CD4-positive, alpha-beta memory T cell (primary cell): ENCODE measurements at regions of chr7 and their contacts with region 1.

Region 1: DNA sequence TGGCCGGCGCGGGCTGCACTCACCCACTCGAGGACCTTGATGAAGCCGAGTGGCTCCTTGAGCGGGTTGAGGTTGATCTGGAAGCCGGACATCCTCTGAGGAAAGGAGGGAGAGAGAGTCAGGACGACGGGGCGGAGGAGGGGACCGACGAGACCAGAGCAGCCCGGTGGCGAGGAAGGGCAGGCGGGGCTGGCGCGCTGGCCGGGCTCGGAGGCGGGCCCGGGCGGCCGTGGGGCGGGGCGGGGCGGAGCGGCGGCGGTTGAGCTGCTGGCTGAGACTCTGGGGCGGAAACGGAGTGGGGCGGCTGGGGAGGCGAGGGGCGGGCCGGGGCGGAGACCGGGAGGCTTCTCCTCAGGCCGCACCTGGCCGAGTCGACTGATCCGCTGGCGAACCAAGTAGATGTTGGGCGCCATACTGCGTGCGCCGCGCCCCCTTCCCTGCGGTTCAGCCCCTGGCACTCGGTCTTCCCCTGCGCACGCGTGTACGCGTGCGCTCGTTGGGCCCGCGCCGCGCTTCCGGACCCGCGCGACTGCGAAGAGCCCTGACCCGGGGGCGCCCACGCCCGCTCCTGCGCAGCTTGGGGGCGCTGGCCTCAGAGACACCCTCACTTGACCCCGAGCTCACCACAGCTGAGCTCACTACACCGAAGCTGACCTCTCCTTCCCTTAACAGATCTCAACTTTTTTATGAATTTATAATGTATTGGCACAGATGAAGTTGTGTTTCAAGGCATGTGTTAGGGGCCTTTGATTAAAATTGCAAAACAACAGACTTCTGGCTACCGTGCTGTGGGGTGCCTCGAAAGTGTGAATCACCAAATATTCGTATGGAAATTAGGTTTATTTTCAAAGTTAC is at the start of gene SYPL1:
- DNase-seq: peak; percentile 91 to 93 (median 92)
- H3K4me3 ChIP-seq: peak within 1 kb of the TSS; percentile 60 to 76
- H3K4me3 Mint-ChIP-seq: peak within 1 kb of the TSS; percentile 88 to 96 (median 92)
- H3K27ac ChIP-seq: peak within 1 kb of the TSS; percentile 69
- H3K27ac Mint-ChIP-seq: peak within 1 kb of the TSS; percentile 84 to 98 (median 97)
- H3K4me1 ChIP-seq: peaks cover 52% of the 10 kb centered on the region
- H3K4me1 Mint-ChIP-seq: peaks cover 53 to 75% (median 65%) of the 10 kb centered on the region in 4 donors
- H3K27me3 ChIP-seq: no peaks in the 10 kb centered on the region
- H3K27me3 Mint-ChIP-seq: no peaks in the 10 kb centered on the region
- total RNA-seq, gene SYPL1: 46.9 to 47.9 TPM

Region 2: DNA sequence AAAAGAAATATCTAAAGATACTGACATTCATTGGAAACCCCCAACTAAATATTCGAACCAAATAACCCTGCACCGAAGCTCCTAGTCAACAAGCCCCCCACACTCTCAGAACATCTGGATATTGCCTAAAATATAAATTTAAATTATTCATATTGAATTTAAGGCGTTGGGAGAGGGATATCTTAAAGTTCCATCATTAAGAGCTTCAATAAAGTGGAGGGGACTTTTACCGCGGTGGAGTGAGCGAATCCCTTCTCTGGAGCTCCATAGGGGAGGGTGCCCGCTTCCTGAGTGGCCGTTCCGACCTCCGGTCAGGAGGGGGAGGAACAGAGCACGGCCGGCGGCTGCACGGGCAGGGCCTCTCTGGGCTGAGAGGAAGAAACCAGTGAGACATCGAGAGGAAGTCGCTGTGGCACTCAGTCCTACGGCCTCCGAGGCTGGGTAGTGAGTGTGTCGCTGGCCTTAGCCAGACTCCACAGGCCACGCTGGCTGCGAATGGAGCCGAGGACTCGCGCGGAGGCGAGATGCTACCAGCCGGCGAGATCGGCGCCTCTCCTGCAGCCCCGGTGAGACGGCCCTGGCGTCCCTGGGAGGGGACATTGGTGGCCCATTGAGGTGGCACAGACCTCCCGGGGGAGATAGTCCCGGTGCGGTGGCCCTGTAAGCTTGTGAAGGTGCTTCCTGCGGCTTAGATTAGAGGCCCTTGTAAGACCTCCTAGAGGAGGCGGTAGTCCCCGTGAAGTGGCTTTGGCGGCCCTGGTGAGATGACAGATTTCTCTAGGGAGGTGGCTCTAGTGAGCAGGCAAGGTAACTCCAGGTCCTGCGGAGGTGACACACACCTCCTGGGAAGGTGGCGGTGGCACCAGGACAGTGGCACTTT is 580.3 kb before region 1 on chr7 and contains the start of gene RINT1:
- CTCF ChIA-PET with region 1: interaction called, 6 read pairs
- POLR2A ChIA-PET with region 1: interaction called, 4 read pairs
- intact Hi-C with region 1: loop called (anchors 5 kb)
- DNase-seq: peak; percentile 86 to 88 (median 87)
- H3K4me3 ChIP-seq: peak within 1 kb of the TSS; percentile 93 to 94
- H3K4me3 Mint-ChIP-seq: peak within 1 kb of the TSS; percentile 85 to 98 (median 92)
- H3K27ac ChIP-seq: peak within 1 kb of the TSS; percentile 77
- H3K27ac Mint-ChIP-seq: peak within 1 kb of the TSS; percentile 73 to 98 (median 97)
- H3K4me1 ChIP-seq: peaks cover 23% of the 10 kb centered on the region
- H3K4me1 Mint-ChIP-seq: peaks cover 16 to 50% (median 30%) of the 10 kb centered on the region in 4 donors
- H3K27me3 ChIP-seq: no peaks in the 10 kb centered on the region
- H3K27me3 Mint-ChIP-seq: no peaks in the 10 kb centered on the region
- total RNA-seq, gene RINT1: 25.7 to 26.5 TPM

Region 3: DNA sequence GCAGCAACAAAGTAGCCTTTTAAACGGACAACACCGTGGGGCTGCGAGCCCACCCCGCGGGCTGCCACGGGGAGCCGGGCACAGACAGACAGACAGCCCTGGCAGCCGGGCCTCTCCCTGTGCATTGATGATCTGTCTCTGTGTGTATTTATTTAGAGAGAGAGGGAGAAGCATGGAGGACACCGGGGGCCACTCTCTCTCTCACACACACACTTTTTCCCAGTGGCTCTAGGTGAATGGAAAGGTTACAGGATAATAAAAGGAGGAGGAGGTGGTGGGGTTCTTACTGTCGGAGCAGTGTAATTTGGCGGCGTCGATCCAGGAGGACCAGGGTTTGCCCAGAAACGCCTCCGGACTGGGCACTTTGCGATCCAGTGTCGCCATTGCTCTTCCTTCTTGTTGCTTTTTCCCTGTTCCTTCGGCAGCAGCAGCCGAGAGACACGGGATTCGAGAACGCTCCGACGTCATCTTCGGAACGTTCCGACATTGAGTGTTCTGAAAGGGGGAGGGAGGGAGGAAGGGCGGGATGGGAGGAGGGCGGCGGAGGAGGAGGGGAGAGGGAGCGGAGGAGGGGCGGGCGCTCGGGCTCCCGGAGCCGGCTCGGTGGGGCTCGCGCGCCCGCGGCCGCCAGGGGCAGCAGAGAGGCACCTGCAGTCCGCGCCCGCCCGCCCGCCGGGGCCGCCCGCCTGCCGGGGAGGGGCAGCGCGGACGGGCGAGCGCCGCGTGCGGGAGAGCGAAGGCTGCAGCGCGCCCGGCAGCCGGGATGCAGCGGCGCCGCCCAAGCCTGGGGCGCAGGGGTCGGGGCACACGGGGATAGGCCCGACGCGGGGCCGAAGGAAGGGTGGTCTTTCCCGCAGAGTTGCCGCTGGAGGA is 236.0 kb before region 1 on chr7 and contains the start of gene ATXN7L1:
- CTCF ChIA-PET with region 1: no interaction called
- POLR2A ChIA-PET with region 1: interaction called, 3 read pairs
- intact Hi-C with region 1: loop called (anchors 5 kb)
- DNase-seq: peak; percentile 85 to 90 (median 86)
- H3K4me3 ChIP-seq: peak within 1 kb of the TSS; percentile 78 to 92
- H3K4me3 Mint-ChIP-seq: peak within 1 kb of the TSS; percentile 95 to 100 (median 98)
- H3K27ac ChIP-seq: peak within 1 kb of the TSS; percentile 82
- H3K27ac Mint-ChIP-seq: peak within 1 kb of the TSS; percentile 83 to 99 (median 96)
- H3K4me1 ChIP-seq: peaks cover 52% of the 10 kb centered on the region
- H3K4me1 Mint-ChIP-seq: peaks cover 43 to 63% (median 51%) of the 10 kb centered on the region in 4 donors
- H3K27me3 ChIP-seq: no peaks in the 10 kb centered on the region
- H3K27me3 Mint-ChIP-seq: no peaks in the 10 kb centered on the region
- total RNA-seq, gene ATXN7L1: 60.4 to 62.2 TPM

Region 4: GRCh38 chr7:106071356-106071998 is 40.9 kb before region 1 on chr7:
- CTCF ChIA-PET with region 1: interaction called, 25 read pairs
- POLR2A ChIA-PET with region 1: interaction called, 142 read pairs
- intact Hi-C with region 1: loop called (anchors 1 kb)
- DNase-seq: peak; percentile 54 to 69 (median 63)
- H3K4me3 ChIP-seq: peak overlapping the region in 1 of 2 donors; percentile 49
- H3K4me3 Mint-ChIP-seq: peak overlapping the region; percentile 73 to 86 (median 82)
- H3K27ac ChIP-seq: peak overlapping the region; percentile 52
- H3K27ac Mint-ChIP-seq: peak overlapping the region; percentile 86 to 95 (median 94)
- H3K4me1 ChIP-seq: peaks cover 43% of the 10 kb centered on the region
- H3K4me1 Mint-ChIP-seq: peaks cover 28 to 62% (median 42%) of the 10 kb centered on the region in 4 donors
- H3K27me3 ChIP-seq: no peaks in the 10 kb centered on the region
- H3K27me3 Mint-ChIP-seq: no peaks in the 10 kb centered on the region

Region 5: DNA sequence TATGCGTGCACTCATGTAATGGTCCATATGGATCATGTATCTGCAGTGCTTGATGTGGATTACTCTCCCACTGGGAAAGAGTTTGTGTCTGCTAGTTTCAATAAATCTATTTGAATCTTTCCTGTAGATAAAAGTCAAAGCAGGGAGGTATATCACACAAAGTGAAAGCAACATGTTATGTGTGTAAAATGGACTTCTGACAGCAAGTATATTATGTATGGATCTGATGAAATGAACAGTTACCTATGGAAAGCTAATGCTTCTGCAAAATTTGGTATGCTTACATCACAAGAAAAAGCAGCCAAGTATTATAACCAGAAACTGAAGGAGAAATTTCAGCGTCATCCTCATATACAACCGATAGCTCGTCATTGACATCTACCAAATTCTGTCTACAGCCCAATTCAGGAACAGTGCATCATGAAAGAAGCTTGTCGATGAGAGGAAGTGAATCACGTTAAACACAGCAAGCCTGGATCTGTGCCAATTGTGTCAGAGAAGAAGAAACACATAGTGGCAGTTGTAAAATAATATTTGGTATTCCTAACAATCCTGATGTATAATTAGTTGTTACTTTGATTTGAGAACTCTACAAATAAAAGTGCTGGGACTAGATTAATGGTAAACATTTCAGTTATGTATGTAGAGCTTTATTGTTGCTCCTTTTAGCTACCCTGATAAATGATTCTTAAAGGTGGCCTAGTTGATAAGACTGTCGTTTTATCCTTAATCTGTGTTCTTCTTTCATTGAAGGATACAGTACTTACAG is 14.0 kb after region 1 on chr7:
- CTCF ChIA-PET with region 1: interaction called, 4 read pairs
- POLR2A ChIA-PET with region 1: interaction called, 26 read pairs
- intact Hi-C with region 1: no loop called
- DNase-seq: peak; percentile 45 to 62 (median 48)
- H3K4me3 ChIP-seq: no peak overlapping the region
- H3K4me3 Mint-ChIP-seq: peak overlapping the region in 6 of 8 donors; percentile 52 to 73 (median 62)
- H3K27ac ChIP-seq: no peak overlapping the region
- H3K27ac Mint-ChIP-seq: peak overlapping the region in 3 of 7 donors; percentile 5 to 72 (median 43)
- H3K4me1 ChIP-seq: peaks cover 8% of the 10 kb centered on the region
- H3K4me1 Mint-ChIP-seq: peaks cover 6 to 14% (median 9%) of the 10 kb centered on the region in 4 donors
- H3K27me3 ChIP-seq: no peaks in the 10 kb centered on the region
- H3K27me3 Mint-ChIP-seq: peaks cover 9 to 10% of the 10 kb centered on the region in 2 donors

Region 6: DNA sequence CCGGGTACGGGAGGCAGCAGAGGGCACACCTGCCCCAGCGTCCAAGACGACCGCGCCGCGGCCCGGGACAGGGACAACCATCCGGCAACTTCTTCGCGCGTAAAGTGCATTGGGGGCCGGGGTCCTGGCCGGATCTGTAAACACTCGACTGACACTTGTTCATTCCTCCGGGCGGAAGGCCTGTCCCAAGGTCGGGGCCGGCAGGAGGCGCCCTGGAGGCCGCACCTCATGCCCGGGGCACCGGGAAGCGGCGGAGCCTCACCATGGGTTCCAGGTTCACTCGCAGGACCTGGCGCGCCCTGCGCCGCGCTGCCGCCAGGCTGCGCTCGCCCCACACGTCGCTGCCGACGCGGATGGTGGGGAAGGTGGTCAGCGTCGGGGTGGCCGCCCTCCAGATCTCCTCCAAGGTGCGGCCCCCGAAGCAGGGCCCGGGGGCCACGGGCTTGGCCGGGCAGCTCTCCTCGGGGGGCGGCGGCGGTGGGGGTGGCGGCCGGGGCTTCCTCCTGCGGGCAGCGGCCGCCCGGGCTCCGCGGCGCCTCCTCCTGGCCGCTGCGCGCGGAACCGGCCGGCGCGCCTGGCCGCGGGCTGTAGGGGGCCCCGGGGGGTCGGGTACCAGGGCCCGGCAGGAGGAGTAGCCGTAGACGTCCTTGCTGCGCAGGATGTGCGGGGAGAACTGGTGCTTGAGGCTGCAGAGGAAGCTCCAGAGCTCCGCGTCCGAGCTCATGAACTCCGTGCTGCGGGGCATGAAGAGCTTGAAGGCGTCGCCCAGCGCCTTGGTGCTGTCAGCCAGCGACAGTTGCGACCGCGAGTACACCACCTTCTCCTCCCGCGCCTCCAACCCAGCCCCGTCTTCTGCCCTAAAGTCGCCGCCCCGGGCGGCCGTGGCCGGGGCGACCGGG is 547.9 kb after region 1 on chr7:
- CTCF ChIA-PET with region 1: no interaction called
- POLR2A ChIA-PET with region 1: interaction called, 4 read pairs
- intact Hi-C with region 1: loop called (anchors 10 kb)
- DNase-seq: peak; percentile 72 to 79 (median 76)
- H3K4me3 ChIP-seq: peak overlapping the region; percentile 14 to 58
- H3K4me3 Mint-ChIP-seq: peak overlapping the region; percentile 85 to 92 (median 88)
- H3K27ac ChIP-seq: peak overlapping the region; percentile 68
- H3K27ac Mint-ChIP-seq: peak overlapping the region; percentile 87 to 97 (median 93)
- H3K4me1 ChIP-seq: peaks cover 35% of the 10 kb centered on the region
- H3K4me1 Mint-ChIP-seq: peaks cover 17 to 40% (median 29%) of the 10 kb centered on the region in 4 donors
- H3K27me3 ChIP-seq: no peaks in the 10 kb centered on the region
- H3K27me3 Mint-ChIP-seq: no peaks in the 10 kb centered on the region